ENCODE measurements at regions of chr5 and their contacts with region 1.

Region 1: DNA sequence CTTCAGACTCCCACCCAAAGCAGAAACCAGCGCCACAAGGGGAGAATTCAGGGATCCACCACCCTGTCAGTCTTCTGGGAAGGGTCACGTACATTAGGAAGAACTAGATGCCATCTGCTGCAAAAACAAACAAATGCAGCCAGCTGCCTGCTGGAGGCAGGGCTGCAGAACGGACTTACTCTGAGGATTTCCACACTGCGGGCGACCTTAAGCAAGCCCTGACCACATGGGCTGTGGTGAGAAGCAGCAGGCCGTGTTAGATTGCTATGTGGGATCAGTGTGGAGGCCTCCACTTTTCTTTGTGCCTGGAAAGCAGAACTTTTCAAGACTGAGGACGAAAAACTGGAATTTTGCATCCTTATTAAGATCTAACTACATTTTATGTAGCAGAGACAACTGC is 13.4 kb upstream of the LTC4S start:
- DNase-seq: no peak
- H3K4me3 ChIP-seq: no peak overlapping the region
- H3K27ac ChIP-seq: no peak overlapping the region
- H3K4me1 ChIP-seq: no peaks in the 10 kb centered on the region
- H3K27me3 ChIP-seq: no peaks in the 10 kb centered on the region
- CTCF ChIP-seq: no peak
- EP300 ChIP-seq: no peak
- POLR2A ChIP-seq: no peak
- RAD21 ChIP-seq: no peak

Region 2: DNA sequence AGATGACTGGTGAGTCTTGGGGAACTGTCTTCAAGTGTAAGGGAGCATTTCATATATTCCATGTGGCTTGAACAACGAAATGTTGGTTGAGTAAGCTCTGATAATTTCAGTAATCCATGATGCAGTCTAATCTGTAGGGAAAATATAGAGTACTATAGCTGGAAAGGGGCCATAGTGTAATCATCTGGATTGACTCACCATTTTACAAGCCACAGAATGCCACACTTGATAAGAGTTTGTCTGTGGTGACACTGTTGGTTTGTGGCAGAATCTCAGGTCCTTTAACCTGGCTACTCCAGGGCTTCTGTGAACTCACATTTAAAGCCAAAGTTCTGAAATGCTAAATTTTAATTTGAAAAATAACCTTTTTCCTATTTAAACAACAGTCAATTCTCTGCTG is 64.1 kb before region 1 on chr5:
- CTCF ChIA-PET with region 1: no interaction called
- POLR2A ChIA-PET with region 1: no interaction called
- DNase-seq: no peak
- H3K4me3 ChIP-seq: no peak overlapping the region
- H3K27ac ChIP-seq: no peak overlapping the region
- H3K4me1 ChIP-seq: no peaks in the 10 kb centered on the region
- H3K27me3 ChIP-seq: no peaks in the 10 kb centered on the region
- CTCF ChIP-seq: no peak
- EP300 ChIP-seq: no peak
- POLR2A ChIP-seq: no peak
- RAD21 ChIP-seq: no peak

Region 3: GRCh38 chr5:179755022-179755421 is 25.3 kb before region 1 on chr5:
- CTCF ChIA-PET with region 1: interaction called, 10 read pairs
- POLR2A ChIA-PET with region 1: interaction called, 4 read pairs
- DNase-seq: no peak
- H3K4me3 ChIP-seq: no peak overlapping the region
- H3K27ac ChIP-seq: no peak overlapping the region
- H3K4me1 ChIP-seq: peaks cover 5 to 7% (median 5%) of the 10 kb centered on the region in 4 experiments; a peak in 6 of 7 replicates
- H3K27me3 ChIP-seq: no peaks in the 10 kb centered on the region
- CTCF ChIP-seq: no peak
- EP300 ChIP-seq: no peak
- POLR2A ChIP-seq: no peak
- RAD21 ChIP-seq: no peak

Region 4: GRCh38 chr5:179763215-179763945 is 17.0 kb before region 1 on chr5:
- CTCF ChIA-PET with region 1: interaction called, 53 read pairs
- POLR2A ChIA-PET with region 1: interaction called, 10 read pairs
- DNase-seq: no peak
- H3K4me3 ChIP-seq: no peak overlapping the region
- H3K27ac ChIP-seq: no peak overlapping the region
- H3K4me1 ChIP-seq: peaks cover 3 to 19% (median 5%) of the 10 kb centered on the region in 4 experiments
- H3K27me3 ChIP-seq: no peaks in the 10 kb centered on the region
- CTCF ChIP-seq: peak; percentile 47 to 94 (median 89)
- EP300 ChIP-seq: no peak
- POLR2A ChIP-seq: no peak
- RAD21 ChIP-seq: peak; percentile 66 to 71

Region 5: DNA sequence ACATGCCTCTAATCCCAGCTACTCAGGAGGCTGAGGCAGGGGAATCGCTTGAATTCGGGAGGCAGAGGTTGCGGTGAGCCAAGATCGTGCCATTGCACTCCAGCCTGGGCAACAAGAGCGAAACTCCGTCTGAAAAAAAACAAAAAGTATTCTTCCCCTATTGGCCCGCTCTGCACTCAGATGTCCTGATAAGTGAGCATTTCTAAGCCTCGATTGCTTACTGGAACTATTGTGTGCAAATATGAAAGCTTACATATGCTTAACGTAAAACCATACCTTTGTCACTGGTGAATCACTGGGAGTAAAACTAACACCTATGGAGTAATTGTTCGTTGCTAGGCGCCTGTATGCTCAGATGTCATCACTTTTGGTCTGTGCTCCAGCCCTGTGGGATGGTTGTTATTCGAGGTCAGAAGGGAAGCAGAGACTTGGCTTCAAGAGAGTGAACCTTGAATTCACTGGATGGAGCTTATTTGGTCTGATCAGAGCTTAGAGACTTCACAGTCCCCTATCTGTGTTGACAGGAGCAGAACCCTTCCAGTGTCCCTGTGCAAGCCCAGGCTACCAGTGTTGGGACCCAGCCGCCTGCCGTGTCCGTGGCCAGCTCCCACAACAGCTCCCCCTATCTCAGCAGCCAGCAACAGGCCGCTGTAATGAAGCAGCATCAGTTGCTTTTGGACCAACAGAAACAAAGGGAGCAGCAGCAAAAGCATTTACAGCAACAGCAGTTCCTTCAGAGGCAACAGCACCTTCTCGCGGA is 11.9 kb before region 1 on chr5:
- CTCF ChIA-PET with region 1: interaction called, 53 read pairs
- POLR2A ChIA-PET with region 1: interaction called, 10 read pairs
- DNase-seq: no peak
- H3K4me3 ChIP-seq: no peak overlapping the region
- H3K27ac ChIP-seq: no peak overlapping the region
- H3K4me1 ChIP-seq: peaks cover under 1 to 8% (median 1%) of the 10 kb centered on the region in 4 experiments; a peak in 5 of 7 replicates
- H3K27me3 ChIP-seq: no peaks in the 10 kb centered on the region
- CTCF ChIP-seq: peak; percentile 55 to 67 (median 57)
- EP300 ChIP-seq: no peak
- POLR2A ChIP-seq: no peak
- RAD21 ChIP-seq: peak; percentile 19 to 48; a peak in 2 of 4 replicates

Region 6: DNA sequence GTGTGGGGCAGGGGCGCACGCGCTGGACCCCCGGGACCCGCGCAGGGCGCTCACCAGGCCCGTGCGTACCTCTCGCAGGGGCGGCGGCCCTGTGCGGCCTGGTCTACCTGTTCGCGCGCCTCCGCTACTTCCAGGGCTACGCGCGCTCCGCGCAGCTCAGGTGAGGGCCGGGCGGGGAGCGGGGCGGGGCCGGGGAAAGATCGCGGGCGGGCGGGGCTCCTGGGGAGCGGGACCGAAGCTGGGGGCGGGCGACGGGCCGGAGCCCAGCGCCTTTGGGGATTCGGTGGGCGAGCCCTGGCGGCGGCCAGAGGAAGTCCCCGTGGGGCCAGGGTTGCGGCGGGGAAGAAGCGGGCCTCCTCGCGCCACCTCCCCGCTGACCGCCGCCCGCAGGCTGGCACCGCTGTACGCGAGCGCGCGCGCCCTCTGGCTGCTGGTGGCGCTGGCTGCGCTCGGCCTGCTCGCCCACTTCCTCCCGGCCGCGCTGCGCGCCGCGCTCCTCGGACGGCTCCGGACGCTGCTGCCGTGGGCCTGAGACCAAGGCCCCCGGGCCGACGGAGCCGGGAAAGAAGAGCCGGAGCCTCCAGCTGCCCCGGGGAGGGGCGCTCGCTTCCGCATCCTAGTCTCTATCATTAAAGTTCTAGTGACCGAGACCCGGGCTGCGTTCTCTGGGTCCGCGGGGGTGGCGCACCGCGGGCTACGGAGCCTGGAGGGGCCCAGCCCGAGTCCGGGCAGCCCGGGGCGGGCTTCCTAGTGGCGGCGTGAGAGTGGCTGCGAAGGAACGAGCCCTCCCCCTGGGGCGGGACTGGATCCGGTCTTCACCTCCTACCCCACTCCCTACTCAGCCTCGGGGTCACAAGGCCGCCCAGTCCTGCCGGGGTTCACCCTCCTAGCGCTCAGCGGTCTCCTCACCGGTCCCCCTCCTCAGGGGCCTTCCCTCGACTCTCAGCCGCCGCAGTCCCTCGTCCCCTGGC is 15.8 kb after region 1 on chr5:
- CTCF ChIA-PET with region 1: interaction called, 6 read pairs
- POLR2A ChIA-PET with region 1: interaction called, 15 read pairs
- DNase-seq: peak in 1 of 2 experiments; percentile 85
- H3K4me3 ChIP-seq: peak overlapping the region; percentile 61 to 88 (median 64)
- H3K27ac ChIP-seq: no peak overlapping the region
- H3K4me1 ChIP-seq: peaks cover 0 to 14% (median 9%) of the 10 kb centered on the region in 4 experiments; a peak in 5 of 7 replicates
- H3K27me3 ChIP-seq: peaks cover 0 to 2% (median 0%) of the 10 kb centered on the region in 4 experiments; a peak in 1 of 7 replicates
- CTCF ChIP-seq: peak in 2 of 3 experiments; percentile 64 to 72; a peak in 3 of 4 replicates
- EP300 ChIP-seq: peak in 1 of 2 experiments; percentile 16; a peak in 1 of 3 replicates
- POLR2A ChIP-seq: peak in 1 of 2 experiments; percentile 44; a peak in 2 of 3 replicates
- RAD21 ChIP-seq: peak; percentile 35 to 64